ENCODE measurements at regions of chr19 and their contacts with region 1.

Region 1: DNA sequence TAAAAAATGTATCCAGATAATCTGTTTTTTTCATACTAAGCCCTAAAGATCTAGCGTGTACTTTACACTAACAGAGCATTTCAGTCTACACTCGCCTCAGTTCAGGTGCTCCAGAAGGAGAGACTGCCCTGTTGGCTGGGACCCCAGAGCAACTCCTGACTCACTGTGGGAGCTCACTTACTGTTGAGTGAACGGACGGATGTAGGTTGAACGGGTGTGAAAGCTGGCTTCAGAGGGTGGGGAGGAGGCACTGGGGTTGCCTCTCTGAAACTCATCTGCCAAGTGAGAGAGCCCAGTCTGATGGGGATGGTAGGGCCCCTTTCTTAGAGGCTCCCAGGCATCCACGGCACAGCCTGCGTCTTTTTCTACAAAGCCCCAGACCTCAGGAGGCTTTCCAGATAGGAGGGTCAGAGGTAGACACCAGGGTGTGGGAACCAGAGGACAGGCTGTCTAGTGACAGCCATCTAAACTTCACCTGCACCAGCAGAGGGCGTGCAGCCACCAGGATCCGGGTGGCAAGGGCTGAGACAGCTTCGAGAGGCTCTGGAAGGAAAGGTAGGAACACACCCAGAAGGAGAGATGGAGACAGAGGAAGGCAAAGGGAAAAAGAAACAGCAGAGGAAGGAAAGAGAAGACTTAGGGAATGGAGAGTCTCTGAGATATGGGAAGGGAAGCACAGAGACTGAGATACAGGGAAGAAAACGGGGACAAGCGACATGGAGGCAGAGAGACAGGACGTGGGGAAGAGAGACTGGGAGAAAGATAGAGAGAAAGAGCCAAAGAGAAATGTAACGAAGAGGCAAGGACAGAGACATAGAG is 3.7 kb downstream of the KASH5 start:
- DNase-seq: peak; percentile 65
- H3K4me3 ChIP-seq: no peak overlapping the region
- H3K27ac ChIP-seq: no peak overlapping the region
- H3K4me1 ChIP-seq: no peaks in the 10 kb centered on the region
- H3K27me3 ChIP-seq: no peaks in the 10 kb centered on the region
- CTCF ChIP-seq: peak; percentile 85 to 86

Region 2: DNA sequence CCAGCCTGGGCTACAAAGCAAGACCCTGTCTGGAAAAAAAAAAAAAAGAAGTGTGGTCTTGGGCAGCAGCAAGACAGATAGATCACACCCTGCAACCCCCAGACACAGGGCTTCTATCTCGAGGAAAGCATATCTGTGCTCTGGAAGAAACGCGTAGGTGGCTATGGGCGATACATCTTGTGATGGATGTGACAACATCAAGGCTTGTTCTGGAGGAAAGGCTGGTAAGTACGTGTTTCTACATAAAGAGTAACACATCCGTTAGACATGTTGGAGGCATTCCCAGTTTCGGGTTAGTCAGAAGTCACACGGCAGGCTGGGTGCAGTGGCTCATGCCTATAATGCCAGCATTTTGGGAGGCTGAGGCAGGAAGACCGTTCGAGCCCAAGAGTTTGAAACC is 464.9 kb before region 1 on chr19:
- CTCF ChIA-PET with region 1: no interaction called
- dilution Hi-C with region 1: no loop called
- in situ Hi-C with region 1: no loop called
- intact Hi-C with region 1: no loop called
- DNase-seq: peak; percentile 99
- H3K4me3 ChIP-seq: no peak overlapping the region
- H3K27ac ChIP-seq: peak overlapping the region; percentile 92
- H3K4me1 ChIP-seq: peaks cover 23% of the 10 kb centered on the region
- H3K27me3 ChIP-seq: no peaks in the 10 kb centered on the region
- CTCF ChIP-seq: no peak

Region 3: DNA sequence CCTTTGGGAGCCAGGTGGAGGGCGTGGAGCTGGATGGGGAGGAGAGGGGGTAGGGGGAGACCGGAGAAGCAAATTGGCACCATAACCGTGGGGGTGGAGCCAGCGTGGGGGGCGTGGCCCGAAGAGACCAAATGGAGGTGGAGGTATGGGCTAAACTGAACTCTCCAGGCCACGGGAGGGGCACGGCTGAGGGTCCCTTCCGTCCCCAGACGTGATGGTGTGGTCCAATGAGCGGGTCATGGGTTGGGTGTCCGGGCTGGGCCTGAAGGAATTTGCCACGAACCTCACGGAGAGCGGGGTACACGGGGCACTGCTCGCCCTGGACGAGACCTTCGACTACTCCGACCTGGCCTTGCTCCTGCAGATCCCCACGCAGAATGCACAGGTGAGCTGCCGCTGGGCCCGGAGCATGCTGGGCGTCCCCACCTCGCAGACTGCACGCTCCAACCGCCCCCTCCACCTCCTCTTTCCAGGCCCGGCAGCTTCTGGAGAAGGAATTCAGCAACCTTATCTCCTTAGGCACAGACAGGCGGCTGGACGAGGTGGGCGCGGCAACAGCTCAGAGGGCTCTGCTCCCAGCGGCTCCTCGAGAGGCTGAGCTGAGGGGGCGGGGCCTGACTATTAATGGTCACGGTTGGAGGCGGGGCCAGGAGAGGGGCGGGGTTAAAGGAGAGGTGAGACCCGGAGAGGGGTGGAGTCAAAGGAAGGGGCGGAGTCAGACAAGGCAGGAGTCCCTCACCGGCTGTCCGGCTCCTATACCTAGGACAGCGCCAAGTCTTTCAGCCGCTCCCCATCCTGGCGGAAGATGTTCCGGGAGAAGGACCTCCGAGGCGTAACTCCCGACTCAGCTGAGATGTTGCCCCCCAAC is 242.8 kb before region 1 on chr19:
- CTCF ChIA-PET with region 1: no interaction called
- dilution Hi-C with region 1: no loop called
- in situ Hi-C with region 1: no loop called
- intact Hi-C with region 1: no loop called
- DNase-seq: peak; percentile 91
- H3K4me3 ChIP-seq: peak overlapping the region; percentile 33 to 82 (median 60)
- H3K27ac ChIP-seq: no peak overlapping the region
- H3K4me1 ChIP-seq: peaks cover 19% of the 10 kb centered on the region
- H3K27me3 ChIP-seq: no peaks in the 10 kb centered on the region
- CTCF ChIP-seq: no peak

Region 4: GRCh38 chr19:49287141-49287770 is 104.5 kb before region 1 on chr19:
- CTCF ChIA-PET with region 1: no interaction called
- dilution Hi-C with region 1: loop called (anchors 10 kb)
- in situ Hi-C with region 1: no loop called
- intact Hi-C with region 1: no loop called
- DNase-seq: no peak
- H3K4me3 ChIP-seq: no peak overlapping the region
- H3K27ac ChIP-seq: no peak overlapping the region
- H3K4me1 ChIP-seq: no peaks in the 10 kb centered on the region
- H3K27me3 ChIP-seq: no peaks in the 10 kb centered on the region
- CTCF ChIP-seq: no peak

Region 5: GRCh38 chr19:49468746-49469447 is 77.1 kb after region 1 on chr19:
- CTCF ChIA-PET with region 1: no interaction called
- dilution Hi-C with region 1: loop called (anchors 10 kb)
- in situ Hi-C with region 1: no loop called
- intact Hi-C with region 1: no loop called
- DNase-seq: no peak
- H3K4me3 ChIP-seq: no peak overlapping the region
- H3K27ac ChIP-seq: no peak overlapping the region
- H3K4me1 ChIP-seq: peaks cover 11% of the 10 kb centered on the region
- H3K27me3 ChIP-seq: no peaks in the 10 kb centered on the region
- CTCF ChIP-seq: no peak

Region 6: GRCh38 chr19:49546825-49547565 is 155.2 kb after region 1 on chr19:
- CTCF ChIA-PET with region 1: no interaction called
- dilution Hi-C with region 1: no loop called
- in situ Hi-C with region 1: no loop called
- intact Hi-C with region 1: loop called (anchors 1 kb)
- DNase-seq: peak; percentile 72
- H3K4me3 ChIP-seq: no peak overlapping the region
- H3K27ac ChIP-seq: no peak overlapping the region
- H3K4me1 ChIP-seq: no peaks in the 10 kb centered on the region
- H3K27me3 ChIP-seq: no peaks in the 10 kb centered on the region
- CTCF ChIP-seq: peak; percentile 81 to 85

Region 7: GRCh38 chr19:49558591-49558990 is 166.8 kb after region 1 on chr19:
- CTCF ChIA-PET with region 1: no interaction called
- dilution Hi-C with region 1: no loop called
- in situ Hi-C with region 1: no loop called
- intact Hi-C with region 1: no loop called
- DNase-seq: no peak
- H3K4me3 ChIP-seq: no peak overlapping the region
- H3K27ac ChIP-seq: no peak overlapping the region
- H3K4me1 ChIP-seq: peaks cover 8% of the 10 kb centered on the region
- H3K27me3 ChIP-seq: no peaks in the 10 kb centered on the region
- CTCF ChIP-seq: no peak

Measured in mammary epithelial cell (primary cell).